BJ (cell line): ENCODE measurements at regions of chr7 and their contacts with region 1.

Region 1: DNA sequence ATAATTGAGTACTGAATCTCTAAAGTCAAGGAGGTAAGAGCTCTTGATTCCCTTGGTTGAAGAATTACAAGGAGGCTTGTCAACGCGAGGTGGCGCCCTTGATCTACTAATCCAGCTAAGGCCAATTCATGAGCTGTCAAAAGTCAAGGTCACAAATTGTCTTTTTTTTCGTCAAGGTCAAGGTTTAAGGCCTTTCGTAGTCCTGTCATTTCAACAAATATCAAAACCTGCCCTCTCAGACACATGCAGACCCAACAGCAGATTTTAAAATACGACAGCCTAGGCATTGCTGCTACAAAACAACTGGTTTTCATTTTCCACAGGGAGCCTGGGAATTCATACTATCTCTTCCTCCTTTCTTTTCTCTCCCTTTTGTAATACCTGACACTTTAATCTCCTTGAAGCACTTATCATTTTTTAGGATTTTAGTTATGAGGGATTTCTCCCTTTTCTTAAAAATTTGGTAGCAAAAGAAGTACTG is 3.6 kb downstream of the HOXA13 start:
- DNase-seq: no peak
- H3K4me3 ChIP-seq: peak overlapping the region; percentile 55
- H3K27me3 ChIP-seq: no peaks in the 10 kb centered on the region
- CTCF ChIP-seq: peak; percentile 74

Region 2: GRCh38 chr7:27112955-27113949 is 83.1 kb before region 1 on chr7:
- CTCF ChIA-PET with region 1: no interaction called
- POLR2A ChIA-PET with region 1: no interaction called
- DNase-seq: no peak
- H3K4me3 ChIP-seq: no peak overlapping the region; the same call in 1 of the 2 replicates
- H3K27me3 ChIP-seq: peaks cover 14% of the 10 kb centered on the region
- CTCF ChIP-seq: no peak

Region 3: DNA sequence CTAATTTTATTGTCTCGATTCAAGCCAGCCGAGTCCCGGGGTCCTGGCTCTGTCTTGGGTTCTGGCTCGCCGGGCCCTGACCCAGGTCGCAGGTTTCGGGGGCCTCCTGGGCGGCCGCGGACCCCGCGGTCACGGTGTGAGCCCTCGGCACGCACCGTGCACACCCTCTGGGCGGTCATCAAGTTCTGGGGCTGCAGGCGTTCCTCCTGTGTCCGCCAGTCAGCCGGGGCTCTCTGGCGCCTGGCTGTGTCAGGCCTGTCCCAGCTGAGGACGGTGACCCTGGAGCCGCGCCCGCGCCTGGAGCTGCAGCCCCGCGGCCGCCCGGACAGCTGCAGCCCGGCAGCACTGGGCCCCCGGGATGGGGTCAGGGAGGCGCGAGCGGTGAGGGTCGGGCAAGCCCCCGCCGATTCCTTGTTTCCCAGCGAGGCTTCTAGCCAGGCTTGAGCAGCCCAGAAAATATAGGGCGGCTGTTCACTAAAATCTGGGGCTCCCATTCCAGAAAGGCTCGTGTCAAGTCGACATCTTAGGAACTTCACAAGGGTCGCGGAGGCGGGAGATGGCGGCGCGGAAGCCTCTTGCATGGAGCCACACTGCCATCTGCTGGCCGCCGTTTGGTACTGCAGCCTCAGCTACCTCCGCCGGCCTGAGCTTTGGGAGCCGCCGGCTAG is 35.6 kb before region 1 on chr7:
- CTCF ChIA-PET with region 1: interaction called, 187 read pairs
- POLR2A ChIA-PET with region 1: interaction called, 12 read pairs
- DNase-seq: no peak
- H3K4me3 ChIP-seq: peak overlapping the region; percentile 72
- H3K27me3 ChIP-seq: no peaks in the 10 kb centered on the region
- CTCF ChIP-seq: peak; percentile 98

Region 4: DNA sequence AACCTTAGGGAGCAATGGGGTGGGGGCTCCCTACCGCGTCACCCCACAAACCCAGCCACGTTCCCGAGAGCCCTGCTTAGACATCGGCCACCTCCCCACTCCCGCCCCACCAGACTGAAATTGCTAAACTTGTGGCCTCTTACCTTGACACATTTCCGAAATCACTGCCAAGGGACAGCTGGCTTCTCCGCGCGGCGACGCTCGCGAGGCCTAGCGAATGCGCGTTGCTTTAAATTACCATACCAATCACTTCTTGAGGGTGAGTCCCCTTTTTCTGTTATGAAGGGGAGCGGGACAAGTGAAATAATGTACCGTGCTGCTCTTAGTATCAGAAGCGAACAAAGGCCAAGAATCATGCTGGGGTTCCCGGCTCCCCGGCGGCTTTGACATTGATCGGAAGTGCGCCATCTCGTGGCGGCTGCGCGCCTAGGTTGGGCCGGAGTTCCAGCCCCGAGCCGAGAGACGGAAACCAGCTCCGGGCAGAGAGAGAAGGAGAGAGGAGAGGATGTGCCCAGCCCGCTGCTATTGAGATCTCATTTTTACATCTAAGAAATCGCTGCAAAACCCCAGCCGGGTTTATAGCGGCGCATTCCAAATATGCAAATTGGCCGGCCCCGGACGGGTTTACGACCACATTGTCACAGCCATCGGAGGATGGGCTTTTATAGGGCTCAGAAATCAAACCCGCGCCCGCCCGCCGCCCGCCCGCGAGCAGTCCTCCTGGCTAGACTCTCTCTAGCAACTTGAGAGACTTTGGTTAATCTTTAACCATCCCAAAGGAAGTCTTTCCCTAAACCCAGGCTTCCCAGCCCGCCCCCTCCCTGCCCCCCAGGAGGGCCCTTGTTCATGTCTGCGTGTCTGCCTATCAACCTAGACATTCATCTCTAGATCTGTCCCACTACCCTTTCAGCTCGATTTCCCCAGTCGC is 16.6 kb before region 1 on chr7:
- CTCF ChIA-PET with region 1: interaction called, 187 read pairs
- POLR2A ChIA-PET with region 1: interaction called, 5 read pairs
- DNase-seq: peak; percentile 68
- H3K4me3 ChIP-seq: peak overlapping the region; percentile 72
- H3K27me3 ChIP-seq: no peaks in the 10 kb centered on the region
- CTCF ChIP-seq: peak; percentile 97

Region 5: DNA sequence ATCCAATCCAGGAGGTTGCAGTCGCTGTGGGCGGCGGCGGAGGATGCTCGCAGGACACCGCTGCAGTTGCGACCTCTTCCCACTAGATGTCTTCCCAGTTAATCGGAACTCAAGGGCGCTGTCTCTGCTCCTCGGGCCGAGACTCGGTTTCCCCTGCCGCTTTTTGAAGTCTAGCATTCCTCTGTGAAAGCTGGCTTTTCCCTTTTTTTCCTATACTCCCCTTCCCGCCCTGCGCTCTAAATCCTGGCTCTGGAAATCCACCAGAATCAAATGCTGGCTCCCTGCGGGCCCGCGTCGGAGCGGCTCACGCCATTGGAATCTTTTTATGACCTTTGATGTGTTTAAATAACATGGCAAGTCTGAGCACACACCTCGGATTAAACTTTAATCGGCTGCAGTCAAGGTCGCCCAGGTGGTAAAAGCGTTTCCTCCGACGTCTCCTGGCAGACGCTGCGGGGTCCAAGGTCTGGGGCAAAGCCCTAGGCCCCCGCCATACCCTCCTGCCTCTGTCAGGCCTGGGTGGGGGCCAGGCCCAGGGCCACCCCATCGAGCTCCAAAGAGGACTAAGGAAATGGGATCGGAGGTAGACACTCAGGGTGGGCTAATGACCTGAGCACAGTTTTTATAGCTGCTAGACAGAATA is 14.2 kb after region 1 on chr7:
- CTCF ChIA-PET with region 1: interaction called, 23 read pairs
- POLR2A ChIA-PET with region 1: no interaction called
- DNase-seq: no peak
- H3K4me3 ChIP-seq: no peak overlapping the region
- H3K27me3 ChIP-seq: no peaks in the 10 kb centered on the region
- CTCF ChIP-seq: peak; percentile 79

Region 6: GRCh38 chr7:27605689-27606269 is 409.5 kb after region 1 on chr7:
- CTCF ChIA-PET with region 1: interaction called, 10 read pairs
- POLR2A ChIA-PET with region 1: no interaction called
- DNase-seq: no peak
- H3K4me3 ChIP-seq: no peak overlapping the region
- H3K27me3 ChIP-seq: no peaks in the 10 kb centered on the region
- CTCF ChIP-seq: peak; percentile 50

Region 7: DNA sequence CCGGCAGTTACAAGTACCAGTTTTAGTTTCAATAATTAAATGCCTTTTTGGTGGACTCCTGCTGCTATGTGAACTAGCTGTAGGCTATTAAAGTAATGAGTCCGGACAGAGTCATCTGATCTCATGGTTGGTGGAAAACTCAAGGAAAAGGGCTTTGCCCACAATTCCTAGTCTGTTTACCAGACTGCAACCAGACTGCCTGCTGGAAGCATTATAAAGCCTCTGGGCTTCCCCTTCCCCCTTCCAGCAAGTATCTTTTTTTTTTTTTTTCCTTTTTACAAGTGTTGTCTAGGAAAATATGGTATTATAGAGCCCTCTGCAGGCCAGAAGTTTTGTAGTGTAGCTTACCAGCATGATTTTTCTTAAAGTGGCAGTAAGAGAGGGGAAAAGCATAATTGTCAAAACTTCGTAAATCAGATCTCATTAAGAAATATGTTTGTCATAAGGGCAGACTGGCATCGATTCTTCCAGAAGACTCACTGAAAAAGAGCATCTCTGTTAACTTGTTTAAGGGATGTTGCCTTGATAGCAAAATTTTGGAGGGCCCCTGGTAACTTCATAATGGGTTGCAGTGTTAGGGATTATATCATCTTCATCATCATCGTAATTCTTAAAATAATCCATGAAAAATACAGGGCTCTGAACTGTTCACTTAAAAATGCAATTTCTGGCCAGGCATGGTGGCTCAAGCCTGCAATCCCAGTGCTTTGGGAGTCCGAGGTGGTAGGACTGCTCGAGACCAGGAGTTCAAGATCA is 724.9 kb after region 1 on chr7:
- CTCF ChIA-PET with region 1: interaction called, 14 read pairs
- POLR2A ChIA-PET with region 1: no interaction called
- DNase-seq: peak; percentile 94
- H3K4me3 ChIP-seq: no peak overlapping the region
- H3K27me3 ChIP-seq: no peaks in the 10 kb centered on the region
- CTCF ChIP-seq: peak; percentile 55

Region 8: DNA sequence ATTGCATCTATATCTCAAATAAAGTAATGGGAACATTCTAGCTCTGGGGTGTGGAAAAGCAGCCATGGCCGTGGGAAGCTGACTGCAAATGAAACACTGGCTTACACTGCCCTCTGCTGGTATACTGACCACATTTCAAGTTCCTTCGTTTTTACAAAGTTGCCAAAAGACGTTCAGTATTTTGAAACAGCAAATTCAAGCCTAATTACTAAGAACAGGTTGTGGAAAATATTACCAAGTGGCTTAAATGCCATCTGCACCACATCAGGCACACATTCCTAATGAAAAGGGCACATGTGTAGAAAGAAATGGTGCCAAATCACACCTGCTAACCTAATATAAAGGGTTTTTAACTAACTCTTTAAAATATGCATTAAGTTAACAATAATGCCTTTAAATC is 900.4 kb after region 1 on chr7:
- CTCF ChIA-PET with region 1: interaction called, 10 read pairs
- POLR2A ChIA-PET with region 1: no interaction called
- DNase-seq: no peak
- H3K4me3 ChIP-seq: no peak overlapping the region
- H3K27me3 ChIP-seq: no peaks in the 10 kb centered on the region
- CTCF ChIP-seq: peak; percentile 75